Activated CD4-positive, alpha-beta T cell treated with anti-CD3 and anti-CD28 coated beads for 36 hours (primary cell): ENCODE measurements at regions of chr20 and their contacts with region 1.

Region 1: GRCh38 chr20:63553227-63553932 is 579 bp upstream of the FNDC11 start:
- DNase-seq: peak; percentile 95
- ATAC-seq: peak; percentile 88
- H3K4me3 Mint-ChIP-seq: no peak overlapping the region
- H3K27ac Mint-ChIP-seq: peak overlapping the region; percentile 45
- H3K4me1 Mint-ChIP-seq: peaks cover 11% of the 10 kb centered on the region
- H3K27me3 Mint-ChIP-seq: no peaks in the 10 kb centered on the region

Region 2: DNA sequence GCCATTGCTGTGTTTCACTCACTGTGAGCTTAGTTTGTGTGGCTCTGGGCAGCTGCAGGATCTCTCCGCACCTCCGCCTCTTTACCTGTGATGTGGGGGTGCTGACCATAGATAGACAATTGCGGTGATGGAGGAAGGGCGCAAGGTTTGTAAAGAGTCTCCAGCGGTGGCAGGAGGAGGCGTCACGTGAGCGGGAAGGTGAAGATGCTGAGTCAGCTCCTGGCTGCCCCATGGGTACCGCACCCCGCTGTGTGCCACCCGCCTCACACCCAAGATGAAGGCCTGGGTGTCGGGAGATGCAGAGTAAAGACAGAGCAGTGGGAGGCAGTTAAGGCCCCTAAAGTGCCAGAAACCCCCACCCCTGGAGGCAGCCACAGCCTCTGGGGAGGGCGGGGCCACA is 71.9 kb before region 1 on chr20:
- CTCF ChIA-PET with region 1: no interaction called
- POLR2A ChIA-PET with region 1: interaction called, 10 read pairs
- intact Hi-C with region 1: no loop called
- DNase-seq: no peak
- ATAC-seq: no peak
- H3K4me3 Mint-ChIP-seq: no peak overlapping the region
- H3K27ac Mint-ChIP-seq: no peak overlapping the region
- H3K4me1 Mint-ChIP-seq: peaks cover 3% of the 10 kb centered on the region
- H3K27me3 Mint-ChIP-seq: peaks cover 27% of the 10 kb centered on the region

Region 3: GRCh38 chr20:63641792-63642544 is 88.6 kb after region 1 on chr20:
- CTCF ChIA-PET with region 1: no interaction called
- POLR2A ChIA-PET with region 1: interaction called, 5 read pairs
- intact Hi-C with region 1: loop called in 1 of 2 experiments (anchors 1 kb)
- DNase-seq: peak; percentile 98
- ATAC-seq: peak; percentile 73
- H3K4me3 Mint-ChIP-seq: peak overlapping the region; percentile 65
- H3K27ac Mint-ChIP-seq: no peak overlapping the region
- H3K4me1 Mint-ChIP-seq: peaks cover 31% of the 10 kb centered on the region
- H3K27me3 Mint-ChIP-seq: no peaks in the 10 kb centered on the region

Region 4: DNA sequence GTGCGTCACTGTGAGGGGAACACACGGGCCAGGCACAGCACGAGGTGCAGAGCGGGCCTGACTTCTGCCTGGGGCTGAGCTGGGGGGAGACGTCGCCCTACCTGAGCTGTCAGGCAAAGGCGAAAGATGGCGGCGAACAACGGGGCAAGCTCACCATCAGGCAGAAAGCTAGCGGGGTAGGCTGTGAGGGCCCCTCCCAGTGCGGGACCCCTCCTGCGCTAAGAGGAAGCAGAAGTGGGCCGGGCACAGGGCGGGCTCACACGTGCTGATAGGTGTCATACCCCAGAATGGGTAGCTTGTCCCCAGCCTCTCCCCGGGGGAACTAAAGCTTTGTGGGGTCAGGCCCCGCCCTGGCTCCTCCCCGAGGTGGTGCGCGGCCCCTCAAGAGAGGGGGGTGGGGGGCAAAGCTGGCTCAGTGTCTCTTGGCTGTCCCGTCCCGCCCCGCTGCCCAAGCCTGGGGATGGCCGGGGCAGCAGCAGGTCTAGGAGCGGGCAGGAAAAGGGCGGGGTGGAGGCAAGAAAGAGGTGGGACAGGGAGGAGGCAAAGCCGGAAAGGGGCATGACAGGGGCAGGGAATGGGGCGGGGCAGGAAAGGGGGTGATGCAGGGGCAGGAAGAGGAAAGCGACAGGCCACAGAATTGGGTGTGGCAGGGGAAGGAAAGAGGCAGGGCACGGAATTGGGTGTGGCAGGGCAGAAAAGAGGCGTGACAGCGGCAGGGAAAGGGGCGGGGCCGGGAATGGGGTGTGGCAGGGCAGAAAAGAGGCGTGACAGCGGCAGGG is 388.1 kb after region 1 on chr20:
- CTCF ChIA-PET with region 1: no interaction called
- POLR2A ChIA-PET with region 1: no interaction called
- intact Hi-C with region 1: loop called in 1 of 2 experiments (anchors 1 kb)
- DNase-seq: peak; percentile 90
- ATAC-seq: peak; percentile 83
- H3K4me3 Mint-ChIP-seq: no peak overlapping the region
- H3K27ac Mint-ChIP-seq: peak overlapping the region; percentile 60
- H3K4me1 Mint-ChIP-seq: peaks cover 10% of the 10 kb centered on the region
- H3K27me3 Mint-ChIP-seq: no peaks in the 10 kb centered on the region

Region 5: DNA sequence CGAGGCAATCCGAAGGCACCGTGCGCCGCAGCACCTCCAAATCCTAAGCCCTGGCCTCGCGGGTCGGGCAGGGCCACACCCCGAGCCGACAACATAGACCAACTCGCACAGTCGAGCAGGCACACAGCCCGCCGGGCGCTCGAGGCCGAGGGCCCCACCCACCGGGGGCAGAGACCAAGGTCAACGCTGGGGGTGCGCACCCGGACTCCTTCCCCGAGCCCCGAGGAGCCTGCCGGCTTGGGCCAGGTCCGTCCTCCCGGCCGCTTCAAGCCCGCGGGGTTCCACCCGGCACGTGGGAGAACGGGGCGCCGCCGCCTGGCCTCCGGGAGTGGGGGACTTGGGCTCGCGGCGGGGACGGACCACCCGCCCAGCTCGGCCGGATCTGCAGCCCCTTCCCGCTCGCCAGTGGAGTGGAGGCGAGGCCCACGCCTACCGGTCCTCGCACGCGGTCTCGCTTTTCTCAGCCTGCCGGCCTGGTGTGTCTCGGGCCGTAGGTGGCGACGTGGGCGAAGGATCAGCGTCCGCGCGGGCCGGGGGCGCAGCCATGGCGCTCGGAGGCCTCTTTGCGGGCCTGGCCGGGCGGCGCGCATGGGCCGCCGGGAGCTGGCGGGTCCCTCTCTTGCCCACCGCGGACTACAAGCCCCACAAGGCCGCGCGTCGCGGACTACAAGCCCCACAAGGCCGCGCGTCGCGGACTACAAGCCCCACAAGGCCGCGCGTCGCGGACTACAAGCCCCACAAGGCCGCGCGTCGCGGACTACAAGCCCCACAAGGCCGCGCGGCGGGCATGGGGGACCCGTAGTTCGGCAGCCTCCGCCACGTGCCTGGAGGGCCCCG is 402.7 kb after region 1 on chr20 and contains the start of gene UCKL1:
- CTCF ChIA-PET with region 1: no interaction called
- POLR2A ChIA-PET with region 1: no interaction called
- intact Hi-C with region 1: loop called in 1 of 2 experiments (anchors 2 kb)
- DNase-seq: peak; percentile 95
- ATAC-seq: peak; percentile 78
- H3K4me3 Mint-ChIP-seq: peak within 1 kb of the TSS; percentile 77
- H3K27ac Mint-ChIP-seq: peak within 1 kb of the TSS; percentile 89
- H3K4me1 Mint-ChIP-seq: peaks cover 37% of the 10 kb centered on the region
- H3K27me3 Mint-ChIP-seq: no peaks in the 10 kb centered on the region
- total RNA-seq, gene UCKL1: 28.3 to 32.2 TPM